ENCODE measurements at regions of chr15 and their contacts with region 1.

Region 1: DNA sequence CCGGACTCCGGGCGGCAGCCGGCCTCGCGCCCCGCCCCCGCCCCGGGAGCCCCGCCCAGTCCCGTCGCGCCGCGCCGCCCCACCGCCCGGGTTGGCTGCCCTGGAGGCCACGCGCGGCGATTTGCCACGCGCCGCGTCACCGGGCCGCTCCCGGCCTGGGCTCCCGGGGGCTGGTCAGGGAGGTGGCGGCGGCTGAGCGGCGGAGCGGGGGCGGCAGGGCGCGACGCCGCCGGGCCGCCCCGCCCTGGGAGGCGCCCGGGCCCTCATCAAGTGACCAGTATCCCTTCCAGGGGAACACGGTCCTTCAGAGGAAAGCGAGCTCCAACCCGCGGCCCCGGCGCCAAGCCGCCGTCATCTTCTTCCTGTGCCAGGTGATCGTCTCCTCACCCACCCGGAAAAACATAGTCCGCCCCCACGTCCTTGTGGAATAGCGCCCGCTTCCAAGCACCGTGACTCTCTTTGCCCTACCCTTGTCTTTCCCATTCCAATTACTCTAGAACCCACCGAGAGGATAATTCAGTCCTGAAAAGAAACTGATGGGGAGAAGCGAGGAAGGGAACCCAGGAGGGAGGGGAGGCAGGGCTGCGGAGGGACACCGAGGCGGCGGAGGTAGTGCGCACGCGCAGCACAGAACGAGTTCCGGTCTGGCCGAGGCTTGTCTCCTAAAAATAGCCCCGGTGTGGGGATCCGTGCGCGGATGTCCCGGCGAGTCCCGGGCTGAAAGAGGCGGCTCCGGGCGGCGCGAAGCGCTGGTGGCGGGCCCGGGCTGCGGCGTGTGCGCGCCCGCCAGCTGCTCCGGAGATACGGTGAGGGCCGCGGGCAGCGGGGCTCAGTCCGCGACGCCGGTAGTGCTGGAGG is at the start of gene MEF2A:
- DNase-seq: peak; percentile 97 to 98
- ATAC-seq: peak; percentile 93
- H3K4me3 ChIP-seq: peak within 1 kb of the TSS; percentile 81 to 94
- H3K27ac ChIP-seq: peak within 1 kb of the TSS; percentile 97 to 98
- H3K4me1 ChIP-seq: no peaks in the 10 kb centered on the region
- H3K27me3 ChIP-seq: no peaks in the 10 kb centered on the region
- total RNA-seq, gene MEF2A: 150 to 160 TPM

Region 2: DNA sequence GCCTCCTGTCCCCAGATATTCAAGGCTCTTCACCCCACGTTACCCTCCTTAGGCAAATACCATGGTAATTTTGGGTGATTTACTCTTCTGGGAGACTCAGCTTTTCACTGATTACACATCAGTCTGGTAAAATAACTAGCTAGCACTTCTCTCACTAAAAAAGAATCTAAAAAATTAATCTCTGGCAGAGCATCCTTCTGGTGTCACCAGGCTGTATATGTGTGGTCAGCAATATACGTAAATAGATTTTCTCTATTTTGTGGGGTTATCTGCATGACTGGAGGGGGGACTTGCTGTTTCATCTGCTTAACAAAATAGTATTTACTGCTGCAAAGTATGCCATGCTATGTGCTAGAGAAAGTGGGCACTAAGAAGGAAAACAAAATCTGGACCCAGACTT is 269.1 kb before region 1 on chr15:
- intact Hi-C with region 1: loop called (anchors 1 to 10 kb)
- DNase-seq: no peak
- ATAC-seq: no peak
- H3K4me3 ChIP-seq: no peak overlapping the region
- H3K27ac ChIP-seq: no peak overlapping the region
- H3K4me1 ChIP-seq: no peaks in the 10 kb centered on the region
- H3K27me3 ChIP-seq: no peaks in the 10 kb centered on the region

Region 3: DNA sequence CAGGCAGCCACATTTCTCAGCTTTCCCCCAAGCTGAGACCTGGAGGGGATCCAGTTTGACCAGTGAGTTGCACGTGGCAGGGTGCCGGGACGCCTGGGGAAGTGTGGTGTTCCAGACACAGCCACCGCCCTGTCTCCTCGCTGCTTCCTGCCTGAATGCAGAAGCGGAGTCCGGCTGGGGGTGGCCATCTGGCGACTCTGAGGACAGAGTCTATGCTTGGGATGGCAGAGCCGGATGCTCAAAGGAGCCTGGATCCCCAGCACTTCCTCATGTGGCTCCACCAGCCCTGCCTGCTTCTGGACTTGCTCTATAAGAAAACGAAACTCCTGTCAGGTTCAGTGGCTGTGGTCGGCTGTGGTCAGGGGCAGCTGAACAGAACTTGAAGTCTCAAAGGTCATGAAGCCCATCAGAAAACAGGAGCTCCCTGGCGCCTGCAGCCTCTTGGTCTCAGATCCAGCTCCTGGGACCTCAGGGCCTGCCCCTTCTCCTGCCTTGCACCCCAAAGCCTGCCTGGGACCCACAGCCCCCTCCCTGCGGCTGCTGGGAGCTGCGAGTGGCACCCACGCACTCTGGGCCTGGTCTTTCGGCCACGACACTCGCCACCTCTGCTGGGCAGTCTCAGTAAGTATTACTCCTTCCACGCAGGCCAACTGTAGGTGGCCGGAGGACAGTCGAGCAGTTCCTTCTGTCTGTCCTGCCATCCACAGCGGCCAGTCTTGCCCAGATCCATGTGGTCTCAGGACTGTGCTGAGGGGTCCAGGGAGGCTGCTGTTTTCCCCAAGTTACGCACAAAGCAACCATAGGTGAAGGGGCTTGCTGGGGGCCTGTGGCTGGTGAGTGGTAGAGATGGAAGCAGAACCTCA is 112.5 kb before region 1 on chr15:
- intact Hi-C with region 1: loop called (anchors 5 to 10 kb)
- DNase-seq: peak; percentile 93 to 97
- ATAC-seq: peak; percentile 62
- H3K4me3 ChIP-seq: no peak overlapping the region
- H3K27ac ChIP-seq: peak overlapping the region; percentile 45 to 95
- H3K4me1 ChIP-seq: peaks cover 0 to 5% of the 10 kb centered on the region in 2 donors
- H3K27me3 ChIP-seq: no peaks in the 10 kb centered on the region

Region 4: DNA sequence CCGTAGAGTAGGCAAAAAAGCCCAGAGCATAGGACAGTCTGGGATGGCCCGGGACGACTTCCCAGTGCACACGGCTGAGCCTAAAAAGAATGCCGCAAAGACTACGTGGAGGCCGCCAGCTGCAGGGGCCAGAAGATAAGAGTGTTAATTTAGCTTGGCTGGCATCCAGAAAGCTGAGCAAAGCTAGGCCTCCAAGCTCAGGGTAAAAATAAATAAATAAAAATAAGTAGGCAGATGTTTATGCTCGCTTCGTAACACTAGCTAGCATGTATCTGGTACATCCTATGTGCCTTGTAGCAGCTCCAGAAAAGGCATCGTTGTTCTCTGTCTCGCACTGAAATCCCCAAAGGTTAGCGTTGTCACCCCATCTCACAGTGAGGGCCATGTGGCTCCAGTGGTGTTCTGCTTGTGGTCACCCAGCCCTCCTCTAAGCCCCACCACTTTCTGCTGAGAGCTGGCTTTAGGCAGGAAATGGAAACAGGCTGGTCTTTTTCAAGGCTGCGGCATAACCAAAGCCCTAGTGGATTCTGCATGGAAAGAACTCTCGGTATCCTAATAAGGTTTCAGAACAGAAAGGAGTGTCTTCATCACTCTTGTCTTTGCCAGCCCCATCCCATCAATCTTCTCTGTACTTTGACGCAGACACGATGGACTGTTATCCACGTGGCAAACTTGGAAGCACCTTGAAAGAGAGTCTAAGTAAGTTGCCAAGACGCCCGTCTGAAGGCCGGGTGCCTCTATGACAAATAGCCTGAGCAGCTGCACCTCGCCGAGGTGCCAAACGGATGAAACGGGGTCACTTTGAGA is 57.8 kb before region 1 on chr15:
- intact Hi-C with region 1: loop called in 1 of 2 experiments (anchors 10 kb)
- DNase-seq: peak in 1 of 2 donors; percentile 72
- ATAC-seq: peak; percentile 67
- H3K4me3 ChIP-seq: no peak overlapping the region
- H3K27ac ChIP-seq: peak overlapping the region; percentile 10 to 93
- H3K4me1 ChIP-seq: no peaks in the 10 kb centered on the region
- H3K27me3 ChIP-seq: no peaks in the 10 kb centered on the region

Region 5: DNA sequence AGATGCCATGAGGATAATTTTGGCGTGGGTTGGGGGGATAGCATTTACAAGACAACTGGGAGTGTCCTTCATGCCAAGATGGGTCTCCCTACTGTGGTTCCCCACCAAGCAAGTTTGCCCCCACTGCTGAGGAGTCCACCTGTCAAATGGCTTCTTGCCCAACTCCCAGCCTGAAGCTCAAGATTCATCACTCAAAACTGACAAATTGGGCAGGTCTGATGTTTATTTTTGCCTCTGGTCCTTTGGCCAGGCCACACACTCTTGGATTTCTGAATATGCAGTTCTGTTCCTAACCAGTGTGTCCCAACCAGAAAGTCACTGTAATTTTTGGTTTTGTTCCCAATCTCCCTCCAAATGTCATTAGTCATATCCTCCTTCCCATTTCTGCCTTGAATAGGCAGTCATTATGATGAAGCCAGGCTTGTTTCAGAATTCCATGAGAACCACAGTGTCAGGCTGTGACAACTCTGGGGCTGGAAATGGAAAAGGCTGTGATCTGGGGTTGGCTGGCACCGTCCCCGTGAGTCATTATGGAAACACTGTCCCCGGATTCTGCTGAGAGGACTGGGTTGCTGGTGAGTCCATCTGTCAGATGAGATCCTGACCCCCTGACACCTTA is 29.0 kb before region 1 on chr15:
- intact Hi-C with region 1: loop called in 1 of 2 experiments (anchors 2 kb)
- DNase-seq: peak; percentile 87 to 91
- ATAC-seq: peak; percentile 92
- H3K4me3 ChIP-seq: no peak overlapping the region
- H3K27ac ChIP-seq: peak overlapping the region; percentile 82 to 90
- H3K4me1 ChIP-seq: peaks cover 0 to 6% of the 10 kb centered on the region in 2 donors
- H3K27me3 ChIP-seq: no peaks in the 10 kb centered on the region

Region 6: DNA sequence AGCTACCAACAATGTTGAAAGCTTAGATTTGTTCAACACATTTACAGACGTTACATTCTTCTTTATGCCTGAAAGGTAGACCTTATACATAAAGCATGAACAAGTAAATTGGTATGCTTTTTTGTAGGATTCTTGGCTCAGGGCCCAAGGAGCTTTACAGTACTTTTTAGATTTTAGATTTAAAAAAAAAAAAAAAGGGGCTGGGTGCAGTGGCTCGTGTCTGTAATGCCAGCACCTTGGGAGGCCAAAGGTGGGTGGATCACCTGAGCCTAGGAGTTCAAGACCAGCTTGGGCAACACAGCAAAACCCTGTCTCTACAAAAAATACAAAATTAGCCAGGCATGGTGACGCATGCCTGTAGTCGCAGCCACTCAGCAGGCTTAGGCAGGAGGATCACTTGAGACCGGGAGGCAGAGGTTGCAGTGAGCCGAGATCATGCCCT is 40.0 kb after region 1 on chr15:
- intact Hi-C with region 1: no loop called
- DNase-seq: no peak
- ATAC-seq: no peak
- H3K4me3 ChIP-seq: no peak overlapping the region
- H3K27ac ChIP-seq: no peak overlapping the region
- H3K4me1 ChIP-seq: peaks cover 0 to 3% of the 10 kb centered on the region in 2 donors
- H3K27me3 ChIP-seq: no peaks in the 10 kb centered on the region

Region 7: GRCh38 chr15:99704444-99704838 is 138.9 kb after region 1 on chr15:
- intact Hi-C with region 1: loop called in 1 of 2 experiments (anchors 5 kb)
- DNase-seq: no peak
- ATAC-seq: peak; percentile 90
- H3K4me3 ChIP-seq: no peak overlapping the region
- H3K27ac ChIP-seq: no peak overlapping the region
- H3K4me1 ChIP-seq: peaks cover 0 to 3% of the 10 kb centered on the region in 2 donors
- H3K27me3 ChIP-seq: no peaks in the 10 kb centered on the region